Spleen (tissue), 13 donors: ENCODE measurements at regions of chr3 and their contacts with region 1.

Region 1: GRCh38 chr3:141452036-141452435 is 34.8 kb upstream of the RASA2 start:
- DNase-seq: no peak
- H3K4me3 ChIP-seq: no peak overlapping the region
- H3K27ac ChIP-seq: peak overlapping the region in 7 of 8 donors; percentile 22 to 69 (median 63)
- H3K4me1 ChIP-seq: peaks cover 5 to 30% (median 11%) of the 10 kb centered on the region in 6 donors
- H3K27me3 ChIP-seq: no peaks in the 10 kb centered on the region
- CTCF ChIP-seq: peak in 10 of 11 experiments; percentile 42 to 69 (median 54)
- POLR2A ChIP-seq: no peak

Region 2: DNA sequence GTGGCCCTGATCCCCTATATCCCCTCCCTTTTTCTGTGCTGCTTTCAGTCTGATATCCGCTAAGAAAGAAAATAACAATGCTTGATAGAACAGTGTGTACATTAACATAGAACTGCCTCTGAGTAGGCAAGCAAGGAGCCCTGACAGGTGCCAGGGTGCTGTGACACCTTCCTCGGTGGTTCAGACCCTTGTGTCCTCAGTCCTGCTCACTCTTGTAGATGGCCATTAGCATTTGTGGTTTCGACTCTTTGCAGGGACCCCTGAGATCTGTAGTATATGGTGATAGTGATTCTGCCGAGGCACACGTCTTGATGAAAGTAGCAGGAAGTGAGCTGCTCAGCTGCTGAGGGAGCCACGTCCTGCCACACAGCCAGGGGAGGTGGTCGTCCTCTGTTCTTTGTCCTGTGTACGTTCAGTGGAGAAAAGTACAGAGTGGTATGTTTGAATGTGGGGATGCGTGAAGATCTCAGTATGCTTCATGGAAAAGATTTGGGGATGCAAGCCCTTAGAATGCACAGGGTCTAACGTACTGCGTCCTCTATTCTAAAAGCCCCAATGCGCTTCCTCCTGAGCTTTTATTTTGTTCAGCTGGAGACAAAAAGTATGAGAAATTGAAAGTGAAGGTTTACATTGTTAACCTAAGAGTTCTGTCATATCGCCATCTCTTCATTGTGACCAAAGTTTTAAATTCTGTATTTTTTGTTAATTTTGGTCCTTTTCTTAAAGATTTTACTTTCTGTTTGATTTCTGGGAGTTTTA is 185.1 kb before region 1 on chr3:
- intact Hi-C with region 1: no loop called
- DNase-seq: no peak
- H3K4me3 ChIP-seq: peak overlapping the region in 7 of 8 donors; percentile 2 to 64 (median 35)
- H3K27ac ChIP-seq: peak overlapping the region; percentile 44 to 80 (median 72)
- H3K4me1 ChIP-seq: peaks cover 0 to 27% (median 11%) of the 10 kb centered on the region in 6 donors
- H3K27me3 ChIP-seq: no peaks in the 10 kb centered on the region
- CTCF ChIP-seq: no peak
- POLR2A ChIP-seq: no peak

Region 3: GRCh38 chr3:141308631-141309085 is 143.4 kb before region 1 on chr3:
- intact Hi-C with region 1: loop called (anchors 5 kb)
- DNase-seq: no peak
- H3K4me3 ChIP-seq: no peak overlapping the region
- H3K27ac ChIP-seq: peak overlapping the region in 2 of 8 donors; percentile 64 to 72
- H3K4me1 ChIP-seq: peaks cover 5 to 47% (median 19%) of the 10 kb centered on the region in 6 donors
- H3K27me3 ChIP-seq: no peaks in the 10 kb centered on the region
- CTCF ChIP-seq: peak in 6 of 11 experiments; percentile 17 to 38 (median 26)
- POLR2A ChIP-seq: no peak

Region 4: GRCh38 chr3:141321109-141321497 is 130.9 kb before region 1 on chr3:
- intact Hi-C with region 1: no loop called
- DNase-seq: no peak
- H3K4me3 ChIP-seq: no peak overlapping the region
- H3K27ac ChIP-seq: peak overlapping the region in 5 of 8 donors; percentile 20 to 61 (median 50)
- H3K4me1 ChIP-seq: peaks cover 0 to 12% (median 0%) of the 10 kb centered on the region in 6 donors
- H3K27me3 ChIP-seq: no peaks in the 10 kb centered on the region
- CTCF ChIP-seq: no peak
- POLR2A ChIP-seq: no peak

Region 5: DNA sequence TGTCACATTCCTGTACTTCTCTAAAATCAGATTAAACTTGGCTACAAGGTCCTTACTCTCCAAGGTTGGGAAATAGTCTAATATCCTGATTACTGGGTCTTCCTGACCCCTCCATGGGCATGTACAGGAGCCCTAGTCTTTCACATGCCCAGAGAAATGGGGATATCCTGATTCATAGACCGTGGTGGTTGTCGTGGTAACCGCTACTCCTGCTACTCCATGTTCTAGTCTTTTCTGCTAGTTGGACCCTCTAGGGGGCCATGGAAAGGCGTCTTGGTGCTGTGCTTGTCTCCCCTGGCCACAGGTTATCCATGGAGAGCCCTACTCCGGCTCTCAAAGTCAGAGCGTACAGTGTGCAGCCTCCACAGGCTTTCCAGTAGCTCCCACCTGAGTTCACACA is 96.8 kb before region 1 on chr3:
- intact Hi-C with region 1: loop called (anchors 5 kb)
- DNase-seq: no peak
- H3K4me3 ChIP-seq: no peak overlapping the region
- H3K27ac ChIP-seq: no peak overlapping the region
- H3K4me1 ChIP-seq: no peaks in the 10 kb centered on the region
- H3K27me3 ChIP-seq: peaks cover 0 to 5% (median 0%) of the 10 kb centered on the region in 7 donors
- CTCF ChIP-seq: no peak
- POLR2A ChIP-seq: no peak

Region 6: DNA sequence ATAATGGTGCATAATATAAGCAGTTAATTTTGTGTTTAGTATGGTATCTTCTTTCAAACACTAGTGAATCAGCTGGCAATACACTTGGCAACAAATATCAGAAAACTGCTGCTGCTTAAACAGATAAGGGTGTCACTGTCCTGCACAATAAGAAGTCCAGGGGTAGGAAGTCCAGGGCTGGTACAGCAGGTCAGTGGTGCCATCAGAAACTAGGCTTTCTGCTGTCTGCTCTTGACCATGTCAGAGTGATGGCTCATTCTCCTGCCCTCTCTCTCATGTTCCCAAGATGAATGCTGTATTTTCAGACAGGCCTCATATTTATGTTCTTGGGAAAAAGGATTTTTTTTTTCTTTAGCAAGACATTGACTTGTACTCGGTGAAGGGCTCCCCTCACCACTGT is 302.0 kb after region 1 on chr3:
- intact Hi-C with region 1: no loop called
- DNase-seq: no peak
- H3K4me3 ChIP-seq: no peak overlapping the region
- H3K27ac ChIP-seq: no peak overlapping the region
- H3K4me1 ChIP-seq: no peaks in the 10 kb centered on the region
- H3K27me3 ChIP-seq: no peaks in the 10 kb centered on the region
- CTCF ChIP-seq: no peak
- POLR2A ChIP-seq: no peak